ENCODE measurements at regions of chr2 and their contacts with region 1.

Region 1: DNA sequence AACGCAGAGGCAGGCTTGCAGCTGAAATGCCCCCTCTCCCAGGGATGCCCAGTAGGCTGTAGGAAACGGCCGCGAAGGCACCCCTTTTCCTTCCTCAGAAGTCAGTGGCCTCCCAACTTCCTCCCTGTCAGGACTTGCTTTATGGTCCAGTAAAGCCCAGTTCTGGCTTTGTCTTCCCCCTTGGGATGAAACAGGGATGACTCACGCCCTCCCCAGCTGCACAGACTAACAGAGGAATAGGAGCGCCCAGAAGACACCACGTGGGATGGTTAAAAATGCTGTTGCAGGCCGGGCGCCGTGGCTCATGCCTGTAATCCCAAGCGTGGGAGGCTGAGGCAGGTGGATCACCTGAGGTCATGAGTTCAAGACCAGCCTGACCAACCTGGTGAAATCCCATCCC is 6.9 kb downstream of the CREG2 start:
- DNase-seq: no peak
- H3K4me3 ChIP-seq: no peak overlapping the region
- H3K27ac ChIP-seq: no peak overlapping the region
- H3K4me1 ChIP-seq: peaks cover 3% of the 10 kb centered on the region; the same call in 1 of the 2 replicates
- H3K27me3 ChIP-seq: no peaks in the 10 kb centered on the region
- CTCF ChIP-seq: no peak

Region 2: DNA sequence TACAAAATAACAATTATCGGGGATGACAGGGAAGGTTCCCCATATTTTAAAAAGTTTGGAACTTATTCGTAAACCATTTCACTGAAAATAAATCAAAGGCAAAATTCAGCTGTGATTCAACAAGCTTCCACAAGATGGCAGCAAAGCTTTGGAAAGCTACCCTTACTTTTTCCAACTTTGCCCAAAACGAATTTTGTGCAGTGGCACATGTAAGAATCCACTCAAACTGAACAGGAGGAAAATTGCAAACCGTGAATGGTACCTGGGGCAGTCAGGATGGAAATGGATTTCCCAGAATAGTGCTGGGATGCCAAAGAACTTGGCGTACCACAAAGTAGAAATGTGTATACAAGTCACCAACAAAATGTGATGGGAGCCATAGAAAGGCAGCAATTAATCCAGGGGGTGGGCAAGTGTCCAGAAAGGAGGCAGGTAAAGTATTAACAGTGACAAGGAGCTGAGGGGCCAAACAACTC is 367.6 kb before region 1 on chr2:
- CTCF ChIA-PET with region 1: no interaction called
- POLR2A ChIA-PET with region 1: no interaction called
- intact Hi-C with region 1: no loop called
- DNase-seq: peak; percentile 19 to 39
- H3K4me3 ChIP-seq: no peak overlapping the region
- H3K27ac ChIP-seq: no peak overlapping the region; the same call in 1 of the 2 replicates
- H3K4me1 ChIP-seq: no peaks in the 10 kb centered on the region
- H3K27me3 ChIP-seq: no peaks in the 10 kb centered on the region
- CTCF ChIP-seq: peak; percentile 91

Region 3: GRCh38 chr2:101396316-101396717 is 15.9 kb after region 1 on chr2:
- CTCF ChIA-PET with region 1: interaction called, 13 read pairs
- POLR2A ChIA-PET with region 1: no interaction called
- intact Hi-C with region 1: no loop called
- DNase-seq: peak; percentile 29 to 88
- H3K4me3 ChIP-seq: peak overlapping the region; percentile 31; the same call in 1 of the 2 replicates
- H3K27ac ChIP-seq: peak overlapping the region; percentile 80
- H3K4me1 ChIP-seq: peaks cover 39% of the 10 kb centered on the region
- H3K27me3 ChIP-seq: no peaks in the 10 kb centered on the region
- CTCF ChIP-seq: no peak

Region 4: GRCh38 chr2:101931404-101931803 is 551.0 kb after region 1 on chr2:
- CTCF ChIA-PET with region 1: no interaction called
- POLR2A ChIA-PET with region 1: interaction called, 10 read pairs
- intact Hi-C with region 1: no loop called
- DNase-seq: no peak
- H3K4me3 ChIP-seq: no peak overlapping the region
- H3K27ac ChIP-seq: no peak overlapping the region
- H3K4me1 ChIP-seq: peaks cover 5% of the 10 kb centered on the region; the same call in 1 of the 2 replicates
- H3K27me3 ChIP-seq: no peaks in the 10 kb centered on the region
- CTCF ChIP-seq: no peak